Mammary epithelial cell (primary cell): ENCODE measurements at regions of chr3 and their contacts with region 1.

Region 1: GRCh38 chr3:149224736-149225594 is 3.3 kb upstream of the CP start:
- DNase-seq: peak; percentile 96
- H3K4me3 ChIP-seq: peak overlapping the region; percentile 30 to 48 (median 41)
- H3K27ac ChIP-seq: peak overlapping the region; percentile 96
- H3K4me1 ChIP-seq: peaks cover 17% of the 10 kb centered on the region
- H3K27me3 ChIP-seq: no peaks in the 10 kb centered on the region
- CTCF ChIP-seq: no peak

Region 2: DNA sequence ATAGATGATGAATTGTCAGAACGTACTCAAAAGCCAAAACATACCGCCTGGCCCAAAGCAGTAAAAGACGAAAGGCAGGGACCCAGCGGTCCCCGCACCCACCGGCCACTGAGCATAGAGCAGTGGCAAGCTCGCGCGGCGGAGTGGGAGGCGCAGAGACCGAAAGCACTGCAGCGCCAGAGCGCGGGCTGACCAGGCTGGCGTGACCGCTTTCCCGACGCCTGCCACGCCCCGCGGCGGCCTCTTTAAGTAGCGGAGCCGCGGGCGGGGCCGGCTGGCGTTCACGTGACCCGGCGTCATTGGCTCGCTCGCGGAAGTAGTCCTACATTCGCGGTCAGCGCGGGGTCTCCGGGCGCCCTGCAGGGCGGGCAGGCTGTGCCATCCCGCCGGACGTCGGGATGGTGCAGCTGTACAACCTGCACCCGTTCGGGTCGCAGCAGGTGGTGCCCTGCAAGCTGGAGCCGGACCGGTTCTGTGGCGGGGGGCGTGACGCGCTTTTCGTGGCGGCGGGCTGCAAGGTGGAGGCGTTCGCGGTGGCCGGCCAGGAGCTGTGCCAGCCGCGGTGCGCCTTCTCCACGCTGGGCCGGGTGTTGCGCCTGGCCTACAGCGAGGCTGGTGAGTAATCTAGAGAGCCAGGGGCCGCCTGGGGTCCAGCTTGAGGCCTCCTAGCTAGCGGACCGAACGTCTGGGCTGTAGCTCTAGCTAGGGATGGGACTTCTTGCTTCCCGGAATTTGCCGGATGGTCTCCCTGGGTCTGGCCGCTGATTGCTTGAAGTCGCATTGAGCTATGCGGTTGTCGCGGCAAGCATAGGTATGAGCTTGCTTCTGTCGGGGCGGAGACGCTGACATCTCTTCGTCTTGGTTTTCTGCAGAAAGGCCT is 95.4 kb before region 1 on chr3 and contains the start of gene HPS3:
- CTCF ChIA-PET with region 1: no interaction called
- dilution Hi-C with region 1: no loop called
- in situ Hi-C with region 1: no loop called
- intact Hi-C with region 1: loop called (anchors 1 kb)
- DNase-seq: peak; percentile 87
- H3K4me3 ChIP-seq: peak within 1 kb of the TSS; percentile 83 to 92 (median 91)
- H3K27ac ChIP-seq: peak within 1 kb of the TSS; percentile 58
- H3K4me1 ChIP-seq: peaks cover 16% of the 10 kb centered on the region
- H3K27me3 ChIP-seq: no peaks in the 10 kb centered on the region
- CTCF ChIP-seq: no peak
- total RNA-seq, gene HPS3: 11.9 to 21.2 TPM

Region 3: DNA sequence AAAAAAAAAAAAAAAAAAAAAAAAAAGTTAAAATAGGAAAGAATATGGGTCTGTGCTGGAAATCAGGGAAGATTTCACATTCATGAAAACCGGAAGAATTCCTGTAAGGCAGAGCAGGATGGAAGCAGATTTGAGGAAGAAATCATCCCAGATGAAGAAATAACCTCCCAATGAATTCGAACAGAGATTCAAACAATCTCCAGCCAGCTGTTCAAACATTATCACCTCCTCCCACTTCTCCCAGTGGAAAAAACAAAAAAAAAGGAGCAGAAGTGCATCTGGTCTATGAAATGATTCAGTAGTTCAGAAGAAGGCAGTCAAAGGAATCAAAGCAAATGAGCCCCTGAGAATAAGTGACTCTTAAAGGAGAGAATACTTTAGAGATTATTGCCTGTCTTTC is 36.5 kb before region 1 on chr3:
- CTCF ChIA-PET with region 1: no interaction called
- dilution Hi-C with region 1: no loop called
- in situ Hi-C with region 1: no loop called
- intact Hi-C with region 1: no loop called
- DNase-seq: no peak
- H3K4me3 ChIP-seq: no peak overlapping the region
- H3K27ac ChIP-seq: no peak overlapping the region
- H3K4me1 ChIP-seq: no peaks in the 10 kb centered on the region
- H3K27me3 ChIP-seq: no peaks in the 10 kb centered on the region
- CTCF ChIP-seq: no peak

Region 4: GRCh38 chr3:149273096-149273751 is 48.3 kb after region 1 on chr3:
- CTCF ChIA-PET with region 1: no interaction called
- dilution Hi-C with region 1: no loop called
- in situ Hi-C with region 1: no loop called
- intact Hi-C with region 1: no loop called
- DNase-seq: peak; percentile 69
- H3K4me3 ChIP-seq: no peak overlapping the region
- H3K27ac ChIP-seq: no peak overlapping the region
- H3K4me1 ChIP-seq: peaks cover 9% of the 10 kb centered on the region
- H3K27me3 ChIP-seq: no peaks in the 10 kb centered on the region
- CTCF ChIP-seq: peak; percentile 96

Region 5: DNA sequence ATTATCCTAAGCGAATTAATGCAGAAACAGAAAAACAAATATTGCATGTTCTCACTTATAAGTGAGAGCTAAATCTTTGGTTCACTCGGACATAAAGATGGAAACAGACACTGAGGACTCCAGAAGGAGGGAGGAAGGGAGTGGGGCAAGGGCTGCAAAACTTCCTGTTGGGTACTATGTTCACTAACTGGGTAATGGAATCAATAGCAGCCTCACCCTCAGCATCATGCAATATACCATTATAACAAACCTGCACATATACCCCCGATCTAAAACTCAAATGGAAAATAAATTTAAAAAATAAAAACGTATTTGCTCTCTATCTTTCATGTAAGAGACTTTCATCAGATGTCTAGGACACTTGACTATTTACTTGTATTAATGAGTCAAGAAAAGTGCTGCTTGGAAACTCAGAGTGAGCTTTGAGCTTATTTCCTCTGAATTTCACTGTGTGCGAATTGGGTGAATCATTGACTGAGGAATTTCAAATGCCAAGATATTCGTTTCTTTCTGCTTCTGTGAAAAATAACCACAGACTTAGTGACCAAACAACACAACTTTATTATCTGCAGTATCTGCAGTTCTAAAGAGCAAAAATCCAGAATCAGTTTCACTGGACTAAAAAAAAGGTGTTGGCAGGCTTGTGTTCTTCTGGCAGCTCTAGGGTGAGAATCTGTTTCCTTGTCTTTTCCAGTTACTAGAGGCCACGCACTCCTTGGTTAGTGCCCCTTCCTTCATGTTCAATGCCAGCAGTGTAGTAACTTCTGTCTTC is 90.0 kb after region 1 on chr3:
- CTCF ChIA-PET with region 1: no interaction called
- dilution Hi-C with region 1: no loop called
- in situ Hi-C with region 1: no loop called
- intact Hi-C with region 1: no loop called
- DNase-seq: peak; percentile 82
- H3K4me3 ChIP-seq: no peak overlapping the region
- H3K27ac ChIP-seq: no peak overlapping the region
- H3K4me1 ChIP-seq: peaks cover 31% of the 10 kb centered on the region
- H3K27me3 ChIP-seq: no peaks in the 10 kb centered on the region
- CTCF ChIP-seq: no peak

Region 6: GRCh38 chr3:150329408-150329807 is 1104.4 kb after region 1 on chr3:
- CTCF ChIA-PET with region 1: no interaction called
- dilution Hi-C with region 1: no loop called
- in situ Hi-C with region 1: no loop called
- intact Hi-C with region 1: no loop called
- DNase-seq: no peak
- H3K4me3 ChIP-seq: no peak overlapping the region
- H3K27ac ChIP-seq: no peak overlapping the region
- H3K4me1 ChIP-seq: peaks cover 17% of the 10 kb centered on the region
- H3K27me3 ChIP-seq: no peaks in the 10 kb centered on the region
- CTCF ChIP-seq: no peak